Aorta (tissue), 5 donors: ENCODE measurements at regions of chr3 and their contacts with region 1.

Region 1: GRCh38 chr3:52286777-52287110 is 884 bp upstream of the GLYCTK start:
- DNase-seq: peak in 1 of 2 donors; percentile 55
- ATAC-seq: no peak
- H3K4me3 ChIP-seq: peak overlapping the region in 1 of 2 donors; percentile 51
- H3K27ac ChIP-seq: no peak overlapping the region
- H3K4me1 ChIP-seq: peaks cover 0 to 2% of the 10 kb centered on the region in 2 donors
- H3K27me3 ChIP-seq: no peaks in the 10 kb centered on the region

Region 2: GRCh38 chr3:52238761-52239701 is 47.7 kb before region 1 on chr3 and contains the start of gene TWF2:
- intact Hi-C with region 1: loop called in 1 of 2 experiments (anchors 5 kb)
- DNase-seq: peak; percentile 87 to 94
- ATAC-seq: peak; percentile 93
- H3K4me3 ChIP-seq: peak within 1 kb of the TSS; percentile 52 to 89
- H3K27ac ChIP-seq: peak within 1 kb of the TSS in 1 of 2 donors; percentile 50
- H3K4me1 ChIP-seq: no peaks in the 10 kb centered on the region
- H3K27me3 ChIP-seq: no peaks in the 10 kb centered on the region
- total RNA-seq, gene TWF2: 40.5 to 52.2 TPM